ENCODE measurements at regions of chr19 and their contacts with region 1.

Region 1: GRCh38 chr19:58305065-58305931 is at the start of gene ERVK3-1:
- DNase-seq: peak; percentile 98
- H3K4me3 Mint-ChIP-seq: peak within 1 kb of the TSS; percentile 90
- H3K27ac Mint-ChIP-seq: peak within 1 kb of the TSS; percentile 96
- H3K4me1 Mint-ChIP-seq: peaks cover 35% of the 10 kb centered on the region
- H3K27me3 Mint-ChIP-seq: no peaks in the 10 kb centered on the region
- total RNA-seq, gene ERVK3-1: 75.2 and 80.7 TPM in 2 replicates

Region 2: GRCh38 chr19:58182989-58183816 is 122.1 kb before region 1 on chr19 and contains the start of gene ZNF274:
- intact Hi-C with region 1: loop called (anchors 1 kb)
- DNase-seq: peak; percentile 98
- H3K4me3 Mint-ChIP-seq: peak within 1 kb of the TSS; percentile 97
- H3K27ac Mint-ChIP-seq: peak within 1 kb of the TSS; percentile 96
- H3K4me1 Mint-ChIP-seq: peaks cover 13% of the 10 kb centered on the region
- H3K27me3 Mint-ChIP-seq: no peaks in the 10 kb centered on the region
- total RNA-seq, gene ZNF274: 19.4 and 19.8 TPM in 2 replicates

Region 3: DNA sequence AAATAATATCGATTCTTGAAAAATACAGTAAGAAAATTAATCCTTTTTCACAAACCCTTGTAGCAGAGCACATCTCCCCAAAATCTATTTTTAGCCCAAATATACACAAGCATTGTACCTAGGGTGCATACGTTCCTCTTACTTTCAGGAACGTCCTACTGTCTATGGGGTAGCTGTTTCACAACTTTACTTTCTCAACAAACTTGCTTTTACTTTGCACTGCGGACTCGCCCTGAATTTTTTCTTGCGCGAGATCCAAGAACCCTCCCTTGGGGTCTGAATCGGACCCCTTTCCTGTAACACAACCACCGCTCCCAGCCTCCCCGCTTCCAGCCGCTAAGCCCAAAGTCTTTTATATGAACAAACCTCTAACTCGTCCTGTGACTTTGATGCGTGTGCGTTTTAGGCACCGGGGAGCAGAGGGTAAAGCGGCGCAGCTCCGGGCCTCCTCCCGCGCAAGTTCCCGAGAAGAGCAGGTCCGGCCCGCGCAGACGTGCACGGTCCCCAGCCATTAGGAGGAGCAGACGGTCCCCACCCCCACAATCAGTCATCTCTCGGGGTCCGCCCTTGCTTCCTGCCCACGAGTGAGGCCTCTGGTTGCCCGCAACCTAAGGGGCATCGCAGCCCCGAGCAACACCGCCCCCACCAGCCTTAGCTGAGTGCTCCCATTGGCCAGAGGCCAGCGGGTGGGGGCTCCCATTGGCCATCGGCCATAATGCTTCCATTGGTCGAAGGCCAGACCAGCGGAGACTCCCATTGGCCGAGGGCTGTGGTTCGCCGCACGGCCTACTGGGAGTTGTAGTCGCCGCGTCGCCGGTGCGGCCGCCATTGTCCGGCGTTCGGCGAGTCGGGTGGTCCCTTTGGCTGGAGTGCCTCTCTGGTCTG is 26.9 kb before region 1 on chr19 and contains the start of gene ZNF8:
- intact Hi-C with region 1: loop called (anchors 1 kb)
- DNase-seq: peak; percentile 99
- H3K4me3 Mint-ChIP-seq: peak within 1 kb of the TSS; percentile 99
- H3K27ac Mint-ChIP-seq: peak within 1 kb of the TSS; percentile 97
- H3K4me1 Mint-ChIP-seq: peaks cover 26% of the 10 kb centered on the region
- H3K27me3 Mint-ChIP-seq: no peaks in the 10 kb centered on the region
- total RNA-seq, gene ZNF8: 4.8 and 5.1 TPM in 2 replicates

Region 4: DNA sequence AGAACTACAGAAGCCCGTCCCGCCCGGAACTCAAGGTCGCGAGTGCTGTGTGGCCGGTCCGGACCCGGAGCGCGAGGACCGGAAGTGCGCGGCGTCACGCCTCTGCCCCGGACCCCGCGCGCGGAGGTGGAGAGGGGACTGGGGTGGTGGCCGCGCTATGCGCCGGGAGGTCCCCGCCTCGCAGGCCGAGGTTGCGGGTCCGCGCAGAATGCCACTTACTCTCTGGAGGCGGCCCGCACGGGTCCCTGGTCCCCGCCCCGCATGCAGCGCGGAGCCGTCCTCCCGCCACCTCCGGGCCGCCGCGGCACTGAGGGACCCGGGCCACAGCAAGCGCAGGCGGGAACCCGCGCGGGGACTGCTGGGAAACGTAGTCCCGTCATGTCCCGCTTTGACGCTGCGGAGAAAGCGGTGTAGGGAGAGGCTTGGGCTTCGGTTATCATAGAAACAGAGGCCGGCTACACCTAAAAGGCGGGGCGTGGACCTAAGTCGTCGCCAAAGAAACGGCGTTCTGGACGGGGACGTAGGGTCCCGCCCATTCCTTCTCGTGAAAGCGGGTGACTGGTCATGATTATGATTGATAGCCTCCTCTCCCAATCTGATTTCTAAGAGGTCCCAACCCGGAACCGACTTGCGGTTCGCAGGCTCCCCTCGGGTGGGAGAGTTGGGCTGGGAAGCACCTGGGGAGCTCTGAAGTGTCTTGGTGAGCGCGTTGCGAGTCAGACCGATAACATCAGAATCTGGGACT is 75.6 kb after region 1 on chr19 and contains the start of gene ZNF837:
- intact Hi-C with region 1: loop called (anchors 2 kb)
- DNase-seq: peak; percentile 99
- H3K4me3 Mint-ChIP-seq: peak within 1 kb of the TSS; percentile 97
- H3K27ac Mint-ChIP-seq: peak within 1 kb of the TSS; percentile 94
- H3K4me1 Mint-ChIP-seq: peaks cover 21% of the 10 kb centered on the region
- H3K27me3 Mint-ChIP-seq: no peaks in the 10 kb centered on the region
- total RNA-seq, gene ZNF837: 0.89 and 1.1 TPM in 2 replicates

Region 5: GRCh38 chr19:58439576-58440554 is 134.6 kb after region 1 on chr19 and contains the start of gene ZNF132:
- intact Hi-C with region 1: loop called (anchors 1 kb)
- DNase-seq: peak; percentile 98
- H3K4me3 Mint-ChIP-seq: peak within 1 kb of the TSS; percentile 97
- H3K27ac Mint-ChIP-seq: peak within 1 kb of the TSS; percentile 97
- H3K4me1 Mint-ChIP-seq: peaks cover 21% of the 10 kb centered on the region
- H3K27me3 Mint-ChIP-seq: no peaks in the 10 kb centered on the region
- total RNA-seq, gene ZNF132: 3.6 and 3.8 TPM in 2 replicates

Region 6: GRCh38 chr19:58572818-58573657 is 267.7 kb after region 1 on chr19 and contains the start of gene MZF1:
- intact Hi-C with region 1: loop called (anchors 1 kb)
- DNase-seq: peak; percentile 100
- H3K4me3 Mint-ChIP-seq: peak within 1 kb of the TSS; percentile 95
- H3K27ac Mint-ChIP-seq: peak within 1 kb of the TSS; percentile 99
- H3K4me1 Mint-ChIP-seq: peaks cover 37% of the 10 kb centered on the region
- H3K27me3 Mint-ChIP-seq: peaks cover 3% of the 10 kb centered on the region
- total RNA-seq, gene MZF1: 21.6 and 23.7 TPM in 2 replicates

Measured in activated CD4-positive, alpha-beta T cell treated with anti-CD3 and anti-CD28 coated beads, Interleukin-2, amount 10 ng/mL, durations not matched to agents 24 days and 14 days (primary cell).